K562 (cell line): ENCODE measurements at regions of chr2 and their contacts with region 1.

Region 1: GRCh38 chr2:86221066-86221684 is 21.9 kb downstream of the MRPL35 start:
- DNase-seq: peak; percentile 74 to 81 (median 78)
- ATAC-seq: peak; percentile 81
- H3K4me3 ChIP-seq: no peak overlapping the region
- H3K27ac ChIP-seq: no peak overlapping the region
- H3K4me1 ChIP-seq: peaks cover 21 to 29% of the 10 kb centered on the region in 2 experiments; a peak in 3 of 5 replicates
- H3K27me3 ChIP-seq: no peaks in the 10 kb centered on the region
- CTCF ChIP-seq: peak; percentile 94 to 99 (median 98)
- EP300 ChIP-seq: no peak
- POLR2A ChIP-seq: no peak
- RAD21 ChIP-seq: peak; percentile 88 to 89

Region 2: DNA sequence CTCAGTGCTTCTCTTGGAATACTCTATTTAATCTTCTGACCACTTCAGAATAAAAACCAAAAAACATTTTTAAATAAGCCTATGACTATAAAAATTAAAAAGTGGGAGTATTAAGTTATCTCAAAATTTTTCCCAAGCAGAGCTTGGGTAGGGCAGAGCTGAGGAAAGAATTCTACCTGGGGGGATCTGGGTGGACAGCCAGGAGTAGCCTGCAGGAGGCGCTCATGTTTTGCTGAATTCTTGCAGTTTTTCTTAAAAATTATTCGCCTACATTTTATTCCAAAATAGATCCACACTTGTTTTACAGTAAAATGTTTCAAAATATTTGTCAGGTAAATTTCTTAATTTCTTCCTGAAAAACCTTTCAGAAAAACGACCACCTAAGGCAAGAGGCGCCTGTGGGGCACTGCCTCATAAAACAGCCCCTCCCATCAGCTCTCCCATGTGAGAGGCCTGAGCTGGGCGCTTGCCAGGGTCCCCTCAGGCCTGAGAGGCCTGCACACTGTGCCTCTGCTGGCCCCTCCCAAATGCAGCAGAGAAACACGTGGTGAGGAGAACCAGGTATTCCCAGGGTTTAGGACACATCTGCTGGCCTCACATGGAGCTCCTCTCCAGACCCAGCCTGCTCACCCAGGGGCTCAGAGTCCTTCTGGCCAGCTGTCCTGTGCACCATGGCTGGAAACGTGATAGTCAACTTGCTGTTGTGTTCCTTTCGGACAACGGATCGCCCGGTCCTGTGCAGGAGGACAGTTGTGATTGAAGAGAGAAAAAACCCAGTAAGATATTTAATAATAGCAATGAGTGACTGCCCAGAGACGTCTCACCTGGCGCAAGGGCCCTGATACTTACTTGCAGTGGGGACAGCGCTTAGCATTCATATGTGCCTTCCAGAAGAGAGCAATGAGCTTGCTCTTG is 133.0 kb before region 1 on chr2:
- CTCF ChIA-PET with region 1: interaction called, 4 read pairs
- POLR2A ChIA-PET with region 1: no interaction called
- in situ Hi-C with region 1: no loop called
- intact Hi-C with region 1: loop called (anchors 5 kb)
- DNase-seq: peak in 3 of 4 experiments; percentile 50 to 54 (median 53)
- ATAC-seq: peak; percentile 73
- H3K4me3 ChIP-seq: no peak overlapping the region
- H3K27ac ChIP-seq: no peak overlapping the region
- H3K4me1 ChIP-seq: no peaks in the 10 kb centered on the region
- H3K27me3 ChIP-seq: no peaks in the 10 kb centered on the region
- CTCF ChIP-seq: peak; percentile 31 to 67 (median 64); a peak in 5 of 6 replicates
- EP300 ChIP-seq: no peak
- POLR2A ChIP-seq: no peak
- RAD21 ChIP-seq: peak; percentile 22 to 56; a peak in 3 of 4 replicates

Region 3: DNA sequence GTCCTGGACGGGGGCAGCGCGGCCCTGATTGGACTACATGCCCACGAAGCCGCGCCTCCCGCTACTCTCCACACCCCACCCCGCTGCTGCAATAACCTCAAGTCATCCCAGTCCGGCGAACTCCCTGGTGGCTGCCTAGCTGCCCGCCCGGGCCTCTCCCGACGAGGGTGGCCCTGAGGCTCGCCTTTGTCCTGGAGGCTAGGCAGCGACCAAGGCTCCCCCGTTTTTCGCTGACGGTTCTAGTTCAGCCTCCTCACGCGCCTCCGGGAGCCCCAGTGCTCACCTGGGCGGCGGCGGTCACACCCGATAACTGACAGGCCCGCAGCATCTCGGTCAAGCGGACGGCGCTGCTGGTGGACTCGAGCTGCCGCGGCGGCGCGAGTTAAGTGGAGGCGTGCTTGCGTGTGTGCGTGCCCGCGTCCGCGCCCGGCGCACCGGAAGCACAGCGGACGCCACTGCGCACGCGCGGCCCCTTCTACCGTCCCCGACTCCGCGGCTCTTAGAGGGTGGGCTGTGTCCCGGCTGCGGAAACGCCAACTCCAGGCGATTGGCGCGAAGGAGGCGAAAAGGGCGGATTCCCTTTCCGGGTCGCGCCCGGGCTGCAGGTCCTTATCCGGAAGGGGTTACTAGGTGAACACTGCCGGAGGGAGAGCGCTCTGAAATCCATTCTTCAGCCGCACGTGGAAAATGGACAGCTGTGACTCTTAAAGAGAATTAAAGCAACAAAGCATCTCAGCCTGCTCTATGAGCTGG is 25.9 kb before region 1 on chr2 and contains the start of gene IMMT:
- CTCF ChIA-PET with region 1: no interaction called
- POLR2A ChIA-PET with region 1: interaction called, 134 read pairs
- in situ Hi-C with region 1: no loop called
- intact Hi-C with region 1: no loop called
- DNase-seq: peak; percentile 86 to 98 (median 90)
- ATAC-seq: peak; percentile 90
- H3K4me3 ChIP-seq: peak within 1 kb of the TSS; percentile 79
- H3K27ac ChIP-seq: peak within 1 kb of the TSS; percentile 98
- H3K4me1 ChIP-seq: peaks cover 24 to 39% of the 10 kb centered on the region in 2 experiments
- H3K27me3 ChIP-seq: no peaks in the 10 kb centered on the region
- CTCF ChIP-seq: no peak
- EP300 ChIP-seq: 0 out of 2 replicates have a peak, but pooled peaks have one; percentile 19
- POLR2A ChIP-seq: peak; percentile 100
- RAD21 ChIP-seq: no peak; a peak in 1 of 4 replicates
- polyA plus RNA-seq, gene IMMT: 153 to 294 TPM

Region 4: DNA sequence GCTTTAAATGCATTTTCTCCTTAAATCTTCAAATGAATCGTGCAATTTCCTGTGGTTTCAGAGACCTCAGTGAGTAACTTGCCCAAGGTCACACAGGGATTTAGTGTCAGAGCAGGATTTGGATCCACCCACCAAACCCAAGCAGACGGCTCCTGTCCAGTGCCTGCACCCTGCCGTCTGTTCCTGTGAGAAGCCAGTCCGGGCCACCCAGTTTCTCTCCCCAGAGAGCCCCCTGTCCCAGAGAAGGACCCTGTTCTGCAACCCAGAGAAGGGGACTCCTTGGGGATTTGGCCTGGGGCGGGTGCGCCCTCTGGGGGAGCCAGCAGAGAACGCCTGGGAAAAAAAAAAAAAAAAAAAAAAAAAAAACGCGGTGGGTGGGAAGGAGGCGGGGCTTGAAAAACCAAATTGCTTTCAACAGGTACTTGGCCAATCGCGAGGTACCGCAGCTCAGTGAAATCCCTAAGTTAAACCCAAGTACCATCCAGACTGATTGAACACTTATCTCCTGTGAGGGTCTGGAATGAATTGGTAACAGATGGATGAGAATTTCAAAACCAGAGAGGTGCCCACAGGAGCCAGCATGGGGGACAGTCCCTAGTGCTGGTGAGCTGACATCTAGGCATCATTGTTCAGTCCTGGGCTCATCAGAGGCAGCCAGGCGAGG is 147.1 kb after region 1 on chr2:
- CTCF ChIA-PET with region 1: interaction called, 20 read pairs
- POLR2A ChIA-PET with region 1: no interaction called
- in situ Hi-C with region 1: no loop called
- intact Hi-C with region 1: loop called (anchors 1 kb)
- DNase-seq: peak; percentile 63 to 82 (median 66)
- ATAC-seq: peak; percentile 88
- H3K4me3 ChIP-seq: no peak overlapping the region
- H3K27ac ChIP-seq: no peak overlapping the region
- H3K4me1 ChIP-seq: no peaks in the 10 kb centered on the region; a peak in 2 of 5 replicates
- H3K27me3 ChIP-seq: peaks cover 2 to 13% of the 10 kb centered on the region in 2 experiments; a peak in 4 of 5 replicates
- CTCF ChIP-seq: peak; percentile 69 to 76 (median 72)
- EP300 ChIP-seq: no peak
- POLR2A ChIP-seq: no peak
- RAD21 ChIP-seq: peak; percentile 45 to 50